ENCODE measurements at regions of chr13 and their contacts with region 1.

Region 1: DNA sequence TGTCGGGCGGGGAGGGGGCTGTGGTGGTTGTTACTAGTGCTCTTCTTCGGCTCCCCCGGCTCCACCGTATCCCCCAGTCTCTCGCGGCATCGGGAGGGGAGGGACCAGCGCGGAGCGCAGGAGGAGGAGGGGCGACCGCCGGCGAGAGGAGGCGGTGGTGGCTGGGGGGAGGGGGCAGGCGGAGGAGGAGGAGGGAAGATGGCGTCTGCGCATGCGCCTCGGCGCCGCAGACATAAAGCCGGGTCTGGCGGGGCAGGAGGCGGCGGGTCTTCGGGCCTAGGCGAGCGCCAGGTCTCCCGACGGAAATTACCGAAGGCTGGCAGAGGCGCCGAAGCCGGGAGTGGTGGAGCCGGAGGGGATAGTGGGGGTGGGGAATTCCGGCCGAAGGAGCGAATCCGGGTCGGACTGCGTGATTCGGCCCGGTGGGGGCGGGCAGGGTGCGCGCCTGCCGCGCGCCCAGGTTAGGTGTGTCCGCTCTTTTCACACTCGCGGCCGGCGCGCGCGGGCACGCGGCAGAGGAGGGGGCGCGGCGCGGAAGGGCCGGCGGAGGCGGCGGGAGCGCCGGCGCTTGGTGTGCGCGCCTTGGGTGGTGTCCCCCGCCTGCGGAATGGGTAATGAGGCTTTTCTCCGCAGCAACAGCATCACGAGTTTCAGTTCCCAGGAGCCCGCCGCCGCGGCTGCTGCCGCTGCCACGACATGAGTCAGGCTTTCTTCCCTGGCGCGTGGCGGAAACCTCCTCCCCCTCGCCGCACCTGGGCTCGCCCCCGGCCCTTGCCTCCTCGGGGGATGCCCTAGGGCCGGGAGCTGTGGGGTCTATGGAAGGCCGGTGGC is 1.3 kb upstream of the TSC22D1 start:
- DNase-seq: peak; percentile 94
- H3K4me3 Mint-ChIP-seq: peak overlapping the region; percentile 88
- H3K27ac Mint-ChIP-seq: peak overlapping the region; percentile 89
- H3K4me1 Mint-ChIP-seq: peaks cover 32% of the 10 kb centered on the region
- H3K27me3 Mint-ChIP-seq: no peaks in the 10 kb centered on the region
- CTCF ChIP-seq: no peak

Region 2: GRCh38 chr13:44523146-44524015 is 54.1 kb before region 1 on chr13:
- CTCF ChIA-PET with region 1: interaction called, 4 read pairs
- POLR2A ChIA-PET with region 1: interaction called, 16 read pairs
- intact Hi-C with region 1: no loop called
- DNase-seq: peak; percentile 78
- H3K4me3 Mint-ChIP-seq: no peak overlapping the region
- H3K27ac Mint-ChIP-seq: no peak overlapping the region
- H3K4me1 Mint-ChIP-seq: no peaks in the 10 kb centered on the region
- H3K27me3 Mint-ChIP-seq: no peaks in the 10 kb centered on the region
- CTCF ChIP-seq: no peak

Region 3: DNA sequence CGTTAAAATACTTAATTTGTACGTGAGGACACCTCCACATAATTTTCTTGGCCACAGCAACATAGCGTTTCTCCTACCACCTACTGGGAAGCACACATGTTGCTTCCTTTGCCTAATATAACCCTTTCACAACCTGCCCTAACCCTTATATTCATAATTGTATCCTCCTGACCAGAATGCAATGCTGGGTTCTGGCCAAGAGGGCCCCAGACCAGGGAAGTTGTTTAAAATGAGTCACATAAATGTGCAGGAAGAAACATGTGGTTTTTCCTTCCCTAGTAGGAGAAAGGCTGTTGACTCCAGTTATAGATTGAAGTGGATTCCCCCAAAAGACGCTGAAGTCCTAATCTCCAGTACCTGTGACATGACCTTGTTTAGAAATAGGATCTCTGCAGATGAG is 224.5 kb after region 1 on chr13:
- CTCF ChIA-PET with region 1: no interaction called
- POLR2A ChIA-PET with region 1: interaction called, 3 read pairs
- intact Hi-C with region 1: loop called (anchors 2 kb)
- DNase-seq: peak; percentile 94
- H3K4me3 Mint-ChIP-seq: no peak overlapping the region
- H3K27ac Mint-ChIP-seq: peak overlapping the region; percentile 89
- H3K4me1 Mint-ChIP-seq: peaks cover 21% of the 10 kb centered on the region
- H3K27me3 Mint-ChIP-seq: no peaks in the 10 kb centered on the region
- CTCF ChIP-seq: peak; percentile 13

Region 4: GRCh38 chr13:44879463-44880058 is 302.1 kb after region 1 on chr13:
- CTCF ChIA-PET with region 1: interaction called, 3 read pairs
- POLR2A ChIA-PET with region 1: no interaction called
- intact Hi-C with region 1: loop called (anchors 2 kb)
- DNase-seq: peak; percentile 62
- H3K4me3 Mint-ChIP-seq: no peak overlapping the region
- H3K27ac Mint-ChIP-seq: no peak overlapping the region
- H3K4me1 Mint-ChIP-seq: no peaks in the 10 kb centered on the region
- H3K27me3 Mint-ChIP-seq: no peaks in the 10 kb centered on the region
- CTCF ChIP-seq: peak; percentile 45

Region 5: GRCh38 chr13:44969551-44970484 is 392.4 kb after region 1 on chr13:
- CTCF ChIA-PET with region 1: interaction called, 3 read pairs
- POLR2A ChIA-PET with region 1: no interaction called
- intact Hi-C with region 1: loop called (anchors 5 kb)
- DNase-seq: peak; percentile 66
- H3K4me3 Mint-ChIP-seq: no peak overlapping the region
- H3K27ac Mint-ChIP-seq: no peak overlapping the region
- H3K4me1 Mint-ChIP-seq: peaks cover 15% of the 10 kb centered on the region
- H3K27me3 Mint-ChIP-seq: no peaks in the 10 kb centered on the region
- CTCF ChIP-seq: peak; percentile 70

Measured in MCF 10A (cell line).